OCI-LY7 (cell line): ENCODE measurements at regions of chr4 and their contacts with region 1.

Region 1: GRCh38 chr4:184263910-184264732 is 46.4 kb upstream of the ENPP6 start:
- DNase-seq: peak; percentile 97
- H3K4me3 ChIP-seq: no peak overlapping the region
- H3K27ac ChIP-seq: peak overlapping the region; percentile 32
- H3K4me1 ChIP-seq: peaks cover 55% of the 10 kb centered on the region
- CTCF ChIP-seq: peak; percentile 97

Region 2: DNA sequence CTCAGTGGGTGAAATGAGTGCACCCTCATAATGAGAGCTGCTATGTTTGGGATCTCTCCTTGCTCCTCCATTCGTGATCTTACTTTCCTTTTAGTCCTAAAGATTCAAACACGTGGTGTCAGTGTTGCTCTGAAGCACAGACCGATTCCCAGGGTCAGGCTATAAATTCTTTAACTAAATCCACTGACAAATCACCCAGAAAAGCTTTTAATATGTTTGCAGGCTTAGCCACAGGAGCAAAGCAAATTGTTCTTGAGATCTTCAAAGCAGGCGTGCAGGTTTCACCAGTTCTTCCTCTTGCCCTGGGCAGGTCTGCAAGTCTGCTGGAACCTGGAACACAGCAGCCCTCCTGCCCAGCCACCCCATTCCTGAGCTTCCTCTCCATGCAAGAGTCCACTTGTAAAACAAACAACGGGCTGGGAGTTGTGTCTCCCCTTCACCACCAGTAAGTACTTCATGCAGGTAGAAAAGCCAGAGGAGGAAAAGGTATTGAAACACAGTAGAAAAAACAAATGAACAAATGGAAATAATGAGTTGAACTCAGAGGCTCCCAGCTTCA is 23.7 kb after region 1 on chr4:
- CTCF ChIA-PET with region 1: interaction called, 10 read pairs
- POLR2A ChIA-PET with region 1: interaction called, 283 read pairs
- intact Hi-C with region 1: loop called (anchors 1 kb)
- DNase-seq: peak; percentile 55
- H3K4me3 ChIP-seq: peak overlapping the region; percentile 58
- H3K27ac ChIP-seq: peak overlapping the region; percentile 96
- H3K4me1 ChIP-seq: peaks cover 99% of the 10 kb centered on the region
- CTCF ChIP-seq: peak; percentile 39; the same call in 1 of the 2 replicates

Region 3: GRCh38 chr4:184343502-184344177 is 79.5 kb after region 1 on chr4:
- CTCF ChIA-PET with region 1: interaction called, 6 read pairs
- POLR2A ChIA-PET with region 1: interaction called, 31 read pairs
- intact Hi-C with region 1: loop called (anchors 1 kb)
- DNase-seq: peak; percentile 64
- H3K4me3 ChIP-seq: peak overlapping the region; percentile 61
- H3K27ac ChIP-seq: peak overlapping the region; percentile 26
- H3K4me1 ChIP-seq: peaks cover 66% of the 10 kb centered on the region
- CTCF ChIP-seq: no peak

Region 4: GRCh38 chr4:184474263-184475095 is 210.4 kb after region 1 on chr4 and contains the start of gene IRF2:
- CTCF ChIA-PET with region 1: interaction called, 4 read pairs
- POLR2A ChIA-PET with region 1: interaction called, 9 read pairs
- intact Hi-C with region 1: loop called (anchors 1 kb)
- DNase-seq: peak; percentile 97
- H3K4me3 ChIP-seq: peak within 1 kb of the TSS; percentile 89
- H3K27ac ChIP-seq: peak within 1 kb of the TSS; percentile 89
- H3K4me1 ChIP-seq: peaks cover 55% of the 10 kb centered on the region
- CTCF ChIP-seq: no peak; the same call in 1 of the 2 replicates
- total RNA-seq, gene IRF2: 29.7 and 32.3 TPM in 2 replicates

Region 5: DNA sequence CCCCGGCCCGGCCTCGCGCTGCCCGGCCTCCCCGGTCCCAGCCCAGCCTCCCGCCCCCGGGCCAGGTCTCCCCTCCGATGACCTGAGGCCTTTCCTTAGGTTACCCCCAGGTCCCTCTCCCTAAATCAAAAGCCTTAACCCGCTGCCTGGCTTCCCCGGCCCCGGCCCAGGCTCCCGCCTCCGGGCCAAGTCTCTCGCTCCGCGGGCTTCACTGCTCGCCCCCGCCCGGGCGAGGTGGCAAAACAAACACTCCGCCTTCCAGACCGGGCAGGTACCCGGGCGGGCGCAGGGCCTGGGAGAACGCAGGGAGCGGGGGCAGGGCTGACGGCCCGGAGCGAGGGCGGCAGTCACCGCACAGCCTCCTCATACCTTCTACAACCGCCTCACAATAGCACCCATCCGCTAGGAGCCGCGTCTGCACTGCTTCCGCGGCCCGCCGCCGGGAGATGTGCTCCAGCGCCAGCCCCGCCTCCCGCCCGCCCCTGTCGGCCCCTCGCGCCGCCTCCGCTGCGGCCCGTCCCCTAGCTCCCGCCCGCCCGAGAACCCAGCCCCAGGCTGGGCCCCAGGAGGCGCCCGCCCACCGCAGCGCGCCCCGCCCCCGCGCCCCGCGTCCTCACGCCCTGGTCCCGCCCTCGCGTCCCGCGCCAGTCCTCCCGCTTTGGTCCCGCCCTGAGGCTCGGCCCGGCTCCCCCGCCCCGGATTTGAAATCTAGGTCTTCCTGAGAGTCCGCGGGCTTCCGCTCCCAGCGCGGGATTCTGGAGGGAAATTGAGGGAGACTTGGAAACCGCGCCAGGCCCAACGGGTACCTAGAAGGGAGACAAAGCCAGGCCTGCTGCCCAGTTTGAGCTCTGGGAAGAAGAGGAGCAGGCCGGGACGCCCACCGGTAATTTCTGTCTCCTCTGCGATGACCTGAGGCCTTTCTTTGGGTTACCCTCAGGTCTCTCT is 385.2 kb after region 1 on chr4 and contains the starts of genes CASP3 and PRIMPOL:
- CTCF ChIA-PET with region 1: no interaction called
- POLR2A ChIA-PET with region 1: interaction called, 4 read pairs
- intact Hi-C with region 1: loop called (anchors 1 kb)
- DNase-seq: peak; percentile 96
- H3K4me3 ChIP-seq: peak within 1 kb of the TSS; percentile 93
- H3K27ac ChIP-seq: peak within 1 kb of the TSS; percentile 79
- H3K4me1 ChIP-seq: peaks cover 42% of the 10 kb centered on the region
- CTCF ChIP-seq: 0 out of 2 replicates have a peak, but pooled peaks have one; percentile 21
- total RNA-seq, gene CASP3: 25.8 and 29.5 TPM in 2 replicates
- total RNA-seq, gene PRIMPOL: 8.8 and 9.2 TPM in 2 replicates

Region 6: GRCh38 chr4:184983672-184984356 is 719.7 kb after region 1 on chr4:
- CTCF ChIA-PET with region 1: no interaction called
- POLR2A ChIA-PET with region 1: no interaction called
- intact Hi-C with region 1: loop called (anchors 5 kb)
- DNase-seq: peak; percentile 84
- H3K4me3 ChIP-seq: no peak overlapping the region
- H3K27ac ChIP-seq: no peak overlapping the region
- H3K4me1 ChIP-seq: peaks cover 11% of the 10 kb centered on the region
- CTCF ChIP-seq: peak; percentile 78